Activated T-helper 1 cell treated with anti-CD3 and anti-CD28 coated beads, Interleukin-12 subunit alpha, Interleukin-12 subunit beta, Interleukin-2, Interleukin-4 antibody, amounts not matched to agents 30 ng/mL and 10 ng/mL and 1 ng/mL, durations not matched to agents 14 hours and 24 hours and 36 hours (primary cell): ENCODE measurements at regions of chr2 and their contacts with region 1.

Region 1: GRCh38 chr2:120287183-120288015 is 34.7 kb downstream of the RALB start:
- DNase-seq: no peak
- H3K4me3 Mint-ChIP-seq: peak overlapping the region; percentile 30
- H3K27ac Mint-ChIP-seq: peak overlapping the region; percentile 90
- H3K4me1 Mint-ChIP-seq: peaks cover 76% of the 10 kb centered on the region
- H3K27me3 Mint-ChIP-seq: no peaks in the 10 kb centered on the region

Region 2: DNA sequence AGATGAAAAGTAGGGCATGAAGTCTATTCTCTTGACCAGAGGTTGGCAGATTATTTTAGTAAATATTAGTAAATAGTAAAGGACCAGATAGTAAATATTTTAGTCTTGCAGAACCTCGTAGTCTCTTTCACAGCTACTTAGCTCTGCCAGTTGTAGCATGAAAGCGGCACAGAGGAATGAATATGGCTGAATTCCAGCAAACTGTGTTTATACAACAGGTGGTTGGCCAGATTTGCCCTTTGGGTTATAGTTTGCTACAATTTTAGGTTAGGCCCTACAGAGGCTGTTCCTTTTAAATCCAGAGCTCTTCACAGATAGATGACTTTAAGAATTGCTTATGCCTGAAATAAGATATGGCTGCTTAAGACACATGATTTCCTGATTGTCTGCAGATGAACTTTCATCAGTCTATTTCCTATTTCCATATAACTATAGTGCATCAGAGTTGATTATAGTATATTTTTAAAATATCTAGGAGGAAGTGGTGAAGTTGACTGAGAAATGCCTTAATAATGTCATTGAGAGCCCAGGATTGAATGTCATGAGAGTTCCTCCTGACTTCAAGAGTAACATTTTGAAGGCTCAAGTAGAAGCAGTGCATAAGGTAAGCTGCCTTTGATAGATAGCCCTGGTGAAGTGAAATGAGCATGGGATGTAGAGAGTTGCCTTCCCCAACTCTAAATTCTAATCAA is 144.7 kb before region 1 on chr2:
- intact Hi-C with region 1: no loop called
- DNase-seq: no peak
- H3K4me3 Mint-ChIP-seq: no peak overlapping the region
- H3K27ac Mint-ChIP-seq: no peak overlapping the region
- H3K4me1 Mint-ChIP-seq: no peaks in the 10 kb centered on the region
- H3K27me3 Mint-ChIP-seq: peaks cover 3% of the 10 kb centered on the region

Region 3: DNA sequence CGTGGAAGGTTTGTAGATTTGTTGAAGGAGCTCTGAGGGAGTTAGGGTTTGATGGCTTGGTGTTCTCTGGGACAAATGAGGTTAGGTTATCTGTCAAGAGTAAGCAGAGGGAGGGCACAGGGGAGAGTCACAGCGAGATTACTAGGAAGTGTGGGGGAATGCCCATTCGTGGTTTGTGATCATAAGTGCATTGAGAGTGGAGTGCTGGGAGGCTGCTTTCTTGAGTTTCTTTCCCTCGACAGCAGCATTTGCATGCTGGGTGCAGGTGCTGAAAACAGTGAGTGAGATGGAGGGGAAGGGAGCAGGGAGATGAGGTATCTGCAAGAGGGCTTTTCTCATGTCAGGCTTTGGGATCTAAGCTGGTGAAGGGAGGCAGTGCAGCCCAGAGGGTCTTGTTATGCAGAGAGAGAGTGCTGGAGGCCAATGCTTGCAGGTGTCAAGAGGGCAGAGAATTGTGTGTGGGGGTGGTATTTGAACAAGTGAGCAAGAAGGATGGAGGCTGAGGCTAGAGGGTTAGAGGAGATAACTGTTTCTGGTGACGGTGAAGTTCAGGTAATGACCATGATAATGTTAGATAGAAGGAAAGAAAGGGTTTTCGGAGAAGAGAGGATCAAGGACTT is 25.9 kb before region 1 on chr2:
- intact Hi-C with region 1: loop called (anchors 2 kb)
- DNase-seq: peak; percentile 56
- H3K4me3 Mint-ChIP-seq: no peak overlapping the region
- H3K27ac Mint-ChIP-seq: no peak overlapping the region
- H3K4me1 Mint-ChIP-seq: peaks cover 38% of the 10 kb centered on the region
- H3K27me3 Mint-ChIP-seq: no peaks in the 10 kb centered on the region

Region 4: GRCh38 chr2:120978359-120979050 is 691.1 kb after region 1 on chr2:
- intact Hi-C with region 1: no loop called
- DNase-seq: no peak
- H3K4me3 Mint-ChIP-seq: no peak overlapping the region
- H3K27ac Mint-ChIP-seq: no peak overlapping the region
- H3K4me1 Mint-ChIP-seq: no peaks in the 10 kb centered on the region
- H3K27me3 Mint-ChIP-seq: no peaks in the 10 kb centered on the region